Gastrocnemius medialis (tissue), 4 donors: ENCODE measurements at regions of chr7 and their contacts with region 1.

Region 1: GRCh38 chr7:143504937-143505297 is 27.2 kb downstream of the TAS2R41 start:
- DNase-seq: no peak
- ATAC-seq: no peak
- H3K4me3 ChIP-seq: no peak overlapping the region
- H3K27ac ChIP-seq: no peak overlapping the region
- H3K4me1 ChIP-seq: peaks cover 0 to 3% of the 10 kb centered on the region in 2 donors
- H3K27me3 ChIP-seq: no peaks in the 10 kb centered on the region
- CTCF ChIP-seq: no peak
- POLR2A ChIP-seq: no peak

Region 2: GRCh38 chr7:143214789-143215679 is 289.9 kb before region 1 on chr7:
- in situ Hi-C with region 1: no loop called
- intact Hi-C with region 1: no loop called
- DNase-seq: peak; percentile 19 to 32
- ATAC-seq: peak; percentile 83 to 91
- H3K4me3 ChIP-seq: no peak overlapping the region
- H3K27ac ChIP-seq: no peak overlapping the region
- H3K4me1 ChIP-seq: no peaks in the 10 kb centered on the region
- H3K27me3 ChIP-seq: no peaks in the 10 kb centered on the region
- CTCF ChIP-seq: peak; percentile 81 to 99 (median 98)
- POLR2A ChIP-seq: no peak

Region 3: GRCh38 chr7:143331179-143331820 is 173.6 kb before region 1 on chr7:
- in situ Hi-C with region 1: no loop called
- intact Hi-C with region 1: no loop called
- DNase-seq: peak; percentile 76 to 82
- ATAC-seq: peak; percentile 95 to 99
- H3K4me3 ChIP-seq: no peak overlapping the region
- H3K27ac ChIP-seq: peak overlapping the region; percentile 78 to 88 (median 86)
- H3K4me1 ChIP-seq: peaks cover 3 to 31% of the 10 kb centered on the region in 2 donors
- H3K27me3 ChIP-seq: no peaks in the 10 kb centered on the region
- CTCF ChIP-seq: no peak
- POLR2A ChIP-seq: no peak

Region 4: GRCh38 chr7:144137501-144137900 is 632.6 kb after region 1 on chr7:
- in situ Hi-C with region 1: no loop called
- intact Hi-C with region 1: loop called (anchors 10 kb)
- DNase-seq: no peak
- ATAC-seq: no peak
- H3K4me3 ChIP-seq: no peak overlapping the region
- H3K27ac ChIP-seq: no peak overlapping the region
- H3K4me1 ChIP-seq: no peaks in the 10 kb centered on the region
- H3K27me3 ChIP-seq: no peaks in the 10 kb centered on the region
- CTCF ChIP-seq: no peak
- POLR2A ChIP-seq: no peak